Heart right ventricle (tissue), 16 donors: ENCODE measurements at regions of chr17 and their contacts with region 1.

Region 1: GRCh38 chr17:7060165-7060891 is 16.4 kb upstream of the SLC16A11 start:
- DNase-seq: no peak
- ATAC-seq: no peak
- H3K4me3 ChIP-seq: no peak overlapping the region
- H3K27ac ChIP-seq: no peak overlapping the region
- H3K4me1 ChIP-seq: peaks cover 0 to 4% (median 0%) of the 10 kb centered on the region in 9 donors
- H3K27me3 ChIP-seq: peaks cover 0 to 24% (median 12%) of the 10 kb centered on the region in 7 donors
- CTCF ChIP-seq: no peak

Region 2: DNA sequence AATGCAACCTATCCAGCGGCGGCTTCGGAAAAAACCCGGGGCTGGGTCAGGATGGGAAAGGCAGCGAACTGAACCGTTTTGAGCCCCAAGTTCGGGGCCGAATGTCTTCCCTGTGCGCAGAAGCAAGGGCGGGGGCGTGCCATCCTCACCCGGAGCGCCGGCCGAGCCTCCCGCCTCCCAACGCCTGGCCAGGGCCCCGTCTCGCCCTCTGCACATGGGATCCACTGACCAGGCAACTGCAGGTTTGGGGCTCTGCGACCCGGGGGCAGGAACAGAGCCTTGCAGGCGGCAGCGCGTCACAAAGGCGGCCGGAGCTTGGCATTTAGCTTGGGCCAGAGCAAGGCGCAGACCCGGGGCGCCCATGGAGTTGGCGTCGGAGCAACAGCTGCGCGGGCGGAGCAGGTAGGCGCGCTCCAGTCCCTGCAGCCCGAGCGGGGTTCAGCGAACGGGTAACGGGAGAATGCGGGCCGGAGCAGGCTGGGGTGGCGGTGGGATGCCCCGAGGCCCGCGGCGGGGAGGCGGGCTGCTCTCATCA is 284.4 kb before region 1 on chr17 and contains the start of gene FBXO39:
- intact Hi-C with region 1: no loop called
- DNase-seq: peak in 1 of 2 donors; percentile 25
- ATAC-seq: peak; percentile 29 to 68 (median 58)
- H3K4me3 ChIP-seq: no peak within 1 kb of the TSS
- H3K27ac ChIP-seq: no peak within 1 kb of the TSS
- H3K4me1 ChIP-seq: peaks cover 0 to 7% (median 0%) of the 10 kb centered on the region in 9 donors
- H3K27me3 ChIP-seq: peaks cover 0 to 49% (median 15%) of the 10 kb centered on the region in 7 donors
- CTCF ChIP-seq: no peak
- total RNA-seq, gene FBXO39: 0.26 TPM in 1 of 10 donors, not detected in the others

Region 3: GRCh38 chr17:7114875-7115614 is 54.7 kb after region 1 on chr17:
- intact Hi-C with region 1: loop called in 1 of 10 experiments (anchors 5 kb)
- DNase-seq: no peak
- ATAC-seq: peak in 7 of 8 donors; percentile 28 to 83 (median 71)
- H3K4me3 ChIP-seq: no peak overlapping the region
- H3K27ac ChIP-seq: peak overlapping the region in 1 of 10 donors; percentile 83
- H3K4me1 ChIP-seq: peaks cover 0 to 31% (median 0%) of the 10 kb centered on the region in 9 donors
- H3K27me3 ChIP-seq: peaks cover 0 to 34% (median 19%) of the 10 kb centered on the region in 7 donors
- CTCF ChIP-seq: no peak

Region 4: DNA sequence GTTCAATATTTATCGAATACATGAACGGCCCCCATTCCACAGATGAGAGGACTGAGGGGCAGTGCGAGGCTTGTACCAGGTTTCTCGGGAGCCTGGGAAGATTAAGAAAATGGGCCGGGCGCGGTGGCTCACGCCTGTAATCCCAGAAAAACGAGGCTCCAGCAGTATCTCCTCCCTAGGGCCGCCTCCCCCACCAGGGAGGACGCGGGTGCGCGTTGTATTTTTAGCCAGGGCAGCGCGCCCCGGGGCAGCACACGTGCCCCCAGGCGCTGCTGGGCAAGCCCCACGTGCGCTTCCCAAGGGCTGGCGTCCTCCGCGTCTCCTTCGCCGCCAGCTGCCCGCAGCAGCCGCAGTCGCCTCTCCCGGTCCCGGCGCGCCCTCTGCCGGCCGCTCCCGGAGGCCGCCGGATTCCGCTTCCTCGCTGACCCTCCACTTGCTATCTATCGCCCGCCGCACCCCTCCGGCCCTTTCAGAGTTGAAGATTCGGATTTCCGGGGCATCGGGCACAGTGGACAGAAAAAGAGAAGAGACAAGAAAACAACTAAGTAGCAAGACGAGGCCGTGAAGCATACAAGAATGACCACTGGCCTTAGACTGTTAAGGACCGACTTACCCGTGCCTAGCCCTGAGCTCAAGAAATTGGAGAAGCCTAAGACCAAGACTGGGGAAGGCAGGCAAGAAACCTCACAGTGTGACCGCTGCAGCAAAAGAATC is 236.0 kb after region 1 on chr17:
- intact Hi-C with region 1: loop called in 2 of 10 experiments (anchors 10 kb)
- DNase-seq: peak; percentile 81 to 88
- ATAC-seq: peak; percentile 71 to 93 (median 78)
- H3K4me3 ChIP-seq: peak overlapping the region in 7 of 10 donors; percentile 7 to 32 (median 14)
- H3K27ac ChIP-seq: peak overlapping the region; percentile 35 to 85 (median 80)
- H3K4me1 ChIP-seq: peaks cover 18 to 53% (median 49%) of the 10 kb centered on the region in 9 donors
- H3K27me3 ChIP-seq: peaks cover 0 to 57% (median 34%) of the 10 kb centered on the region in 7 donors
- CTCF ChIP-seq: peak; percentile 91 to 99 (median 96)